ENCODE measurements at regions of chr16 and their contacts with region 1.

Region 1: GRCh38 chr16:6643080-6643686 is 689.5 kb upstream of the RBFOX1 start:
- DNase-seq: peak; percentile 67
- H3K4me3 Mint-ChIP-seq: no peak overlapping the region
- H3K27ac Mint-ChIP-seq: no peak overlapping the region
- H3K4me1 Mint-ChIP-seq: no peaks in the 10 kb centered on the region
- H3K27me3 Mint-ChIP-seq: no peaks in the 10 kb centered on the region
- CTCF ChIP-seq: peak; percentile 79

Region 2: GRCh38 chr16:5234295-5235050 is 1408.7 kb before region 1 on chr16:
- CTCF ChIA-PET with region 1: interaction called, 3 read pairs
- intact Hi-C with region 1: loop called (anchors 5 kb)
- DNase-seq: no peak
- H3K4me3 Mint-ChIP-seq: no peak overlapping the region
- H3K27ac Mint-ChIP-seq: no peak overlapping the region
- H3K4me1 Mint-ChIP-seq: no peaks in the 10 kb centered on the region
- H3K27me3 Mint-ChIP-seq: peaks cover 63% of the 10 kb centered on the region
- CTCF ChIP-seq: no peak

Region 3: DNA sequence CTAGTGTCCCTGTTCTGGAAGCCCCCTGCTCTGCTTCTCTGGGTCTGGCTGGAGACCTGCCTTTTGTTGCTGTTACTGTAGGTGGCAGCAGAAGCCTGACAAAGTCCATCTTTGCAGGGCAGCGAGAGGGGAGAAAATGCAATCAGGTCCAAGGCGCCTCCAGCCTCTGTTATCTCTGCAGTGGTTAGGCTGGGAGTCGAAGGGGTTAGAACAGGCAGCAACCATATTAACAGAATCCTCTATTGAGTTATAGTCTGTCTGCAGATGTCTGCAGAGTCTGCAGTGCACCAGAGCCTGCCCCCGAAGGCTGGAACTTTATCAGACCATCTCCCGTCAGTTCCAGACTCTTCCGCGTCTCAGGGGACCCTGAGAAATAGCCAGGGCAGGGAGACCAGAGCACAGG is 1140.7 kb before region 1 on chr16:
- CTCF ChIA-PET with region 1: no interaction called
- intact Hi-C with region 1: loop called (anchors 5 kb)
- DNase-seq: peak; percentile 46
- H3K4me3 Mint-ChIP-seq: no peak overlapping the region
- H3K27ac Mint-ChIP-seq: no peak overlapping the region
- H3K4me1 Mint-ChIP-seq: no peaks in the 10 kb centered on the region
- H3K27me3 Mint-ChIP-seq: peaks cover 72% of the 10 kb centered on the region
- CTCF ChIP-seq: peak; percentile 45

Region 4: DNA sequence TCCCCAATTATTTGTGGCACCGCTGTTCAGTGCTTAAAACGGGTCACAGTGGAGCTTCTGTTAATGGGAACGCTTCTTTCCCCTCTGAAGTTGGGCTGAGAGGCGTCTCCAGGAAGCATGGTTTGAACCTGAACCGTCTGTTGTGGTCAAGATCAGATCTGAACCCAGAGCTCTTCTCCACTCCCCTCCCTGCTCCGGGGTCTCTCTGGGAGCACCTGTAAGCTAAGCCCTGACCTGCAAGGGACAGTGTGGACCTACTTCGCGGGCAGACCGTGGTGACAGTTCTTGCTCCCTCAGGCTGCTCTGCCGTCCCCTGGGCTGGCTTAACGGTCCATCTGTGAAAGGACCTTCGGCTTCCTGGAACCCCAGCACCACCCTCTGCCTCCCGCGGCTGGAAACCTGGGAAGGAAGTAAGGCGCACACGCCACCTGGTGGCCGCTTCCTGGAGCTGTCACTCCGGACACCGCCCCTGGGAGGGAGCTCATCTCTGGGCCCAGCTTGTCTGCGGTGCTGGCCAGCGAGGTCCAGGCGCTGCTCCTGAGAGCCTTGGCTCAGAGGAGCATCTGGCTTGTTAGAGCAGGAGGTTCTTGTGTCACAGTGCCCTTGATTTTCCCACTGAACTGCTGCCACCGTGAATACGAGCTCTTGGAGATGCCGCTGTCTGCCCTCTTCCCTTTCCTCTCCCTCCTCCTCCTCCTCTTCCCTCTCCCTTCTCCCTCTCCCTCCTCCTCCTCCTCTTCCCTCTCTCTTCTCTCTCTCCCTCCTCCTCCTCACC is 1027.1 kb before region 1 on chr16:
- CTCF ChIA-PET with region 1: no interaction called
- intact Hi-C with region 1: loop called (anchors 2 kb)
- DNase-seq: peak; percentile 67
- H3K4me3 Mint-ChIP-seq: no peak overlapping the region
- H3K27ac Mint-ChIP-seq: no peak overlapping the region
- H3K4me1 Mint-ChIP-seq: no peaks in the 10 kb centered on the region
- H3K27me3 Mint-ChIP-seq: peaks cover 54% of the 10 kb centered on the region
- CTCF ChIP-seq: peak; percentile 64

Region 5: GRCh38 chr16:6081320-6081976 is 561.7 kb before region 1 on chr16:
- CTCF ChIA-PET with region 1: no interaction called
- intact Hi-C with region 1: loop called (anchors 1 kb)
- DNase-seq: peak; percentile 60
- H3K4me3 Mint-ChIP-seq: no peak overlapping the region
- H3K27ac Mint-ChIP-seq: no peak overlapping the region
- H3K4me1 Mint-ChIP-seq: no peaks in the 10 kb centered on the region
- H3K27me3 Mint-ChIP-seq: no peaks in the 10 kb centered on the region
- CTCF ChIP-seq: peak; percentile 58

Region 6: DNA sequence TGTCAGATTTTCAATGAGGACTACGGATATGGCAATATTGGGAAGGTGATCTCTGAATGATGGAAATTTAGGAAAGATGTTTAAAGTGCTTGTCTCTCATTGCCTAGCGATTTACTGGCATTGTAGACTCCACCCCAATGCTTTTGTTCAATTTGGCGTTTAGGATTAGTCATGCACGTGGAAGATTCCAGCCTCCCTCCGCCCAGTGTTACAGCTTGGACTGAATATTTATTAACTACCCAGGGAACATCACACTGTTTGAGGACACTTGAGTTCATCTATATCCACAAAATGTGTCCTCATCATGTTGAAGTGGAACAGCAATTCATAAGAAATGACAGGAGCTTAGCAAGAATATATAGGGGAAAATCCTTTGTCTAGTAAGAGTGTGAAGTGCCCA is 49.4 kb before region 1 on chr16:
- CTCF ChIA-PET with region 1: no interaction called
- intact Hi-C with region 1: no loop called
- DNase-seq: no peak
- H3K4me3 Mint-ChIP-seq: no peak overlapping the region
- H3K27ac Mint-ChIP-seq: no peak overlapping the region
- H3K4me1 Mint-ChIP-seq: no peaks in the 10 kb centered on the region
- H3K27me3 Mint-ChIP-seq: no peaks in the 10 kb centered on the region
- CTCF ChIP-seq: no peak

Measured in Calu3 (cell line).